ENCODE measurements at regions of chr6 and their contacts with region 1.

Region 1: GRCh38 chr6:32118782-32119628 is 9.0 kb downstream of the ATF6B start:
- DNase-seq: peak; percentile 90 to 91
- H3K4me3 ChIP-seq: no peak overlapping the region
- H3K27ac ChIP-seq: peak overlapping the region in 2 of 3 donors; percentile 26 to 57
- H3K4me1 ChIP-seq: peaks cover 2 to 16% of the 10 kb centered on the region in 2 donors
- H3K27me3 ChIP-seq: no peaks in the 10 kb centered on the region
- CTCF ChIP-seq: peak; percentile 77 to 96 (median 93)
- POLR2A ChIP-seq: no peak

Region 2: DNA sequence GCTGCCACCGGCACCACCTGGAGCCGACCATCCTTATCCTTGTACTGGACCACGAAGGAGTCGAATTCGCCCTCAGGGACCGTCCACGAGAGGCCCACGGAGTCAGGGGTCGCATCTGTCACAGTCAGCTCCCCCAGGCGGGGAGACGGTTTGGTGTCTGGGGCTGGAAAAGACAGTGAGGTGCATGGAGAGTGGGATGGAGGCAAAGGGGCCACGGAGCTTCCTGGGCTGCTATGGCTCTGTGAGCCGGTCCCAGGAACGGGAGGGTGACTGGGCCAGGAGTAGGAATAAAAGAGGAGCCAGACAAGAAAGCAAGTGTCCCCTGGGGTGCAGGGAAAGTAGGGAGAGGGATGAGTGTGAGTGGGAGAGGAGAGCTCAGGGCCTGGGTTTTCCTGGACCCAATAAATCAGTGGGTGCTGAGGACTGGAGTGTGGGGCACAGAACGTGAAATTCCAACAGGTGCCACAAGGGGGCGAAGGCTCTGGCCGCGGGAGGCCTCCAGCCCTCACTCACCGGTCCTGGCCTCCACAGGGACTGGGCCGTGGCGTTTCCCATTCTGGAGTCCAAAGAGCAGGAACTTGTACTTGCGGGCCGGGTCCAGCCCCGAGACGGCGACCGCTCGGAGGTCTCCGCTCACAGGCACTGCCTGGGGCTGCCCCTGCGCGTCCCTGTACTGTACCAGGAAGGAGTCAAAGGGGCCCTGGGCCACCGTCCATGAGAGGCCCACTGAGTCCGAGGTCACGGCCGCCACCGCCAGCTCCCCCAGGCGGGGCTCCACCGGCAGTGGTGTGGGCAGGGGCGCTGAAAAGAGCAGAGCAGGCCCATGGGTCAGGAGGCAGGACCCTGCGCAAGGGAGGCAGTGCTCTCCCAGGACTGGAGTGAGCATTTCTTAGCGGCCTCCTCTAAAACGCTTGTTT is 70.9 kb before region 1 on chr6:
- intact Hi-C with region 1: loop called (anchors 10 kb)
- DNase-seq: peak; percentile 63 to 68
- H3K4me3 ChIP-seq: no peak overlapping the region
- H3K27ac ChIP-seq: peak overlapping the region in 2 of 3 donors; percentile 52 to 82
- H3K4me1 ChIP-seq: peaks cover 0 to 27% of the 10 kb centered on the region in 2 donors
- H3K27me3 ChIP-seq: no peaks in the 10 kb centered on the region
- CTCF ChIP-seq: peak; percentile 68 to 93 (median 80)
- POLR2A ChIP-seq: no peak

Region 3: GRCh38 chr6:32153564-32154513 is 34.8 kb after region 1 on chr6 and contains the start of gene PPT2:
- intact Hi-C with region 1: loop called (anchors 5 kb)
- DNase-seq: peak; percentile 86 to 93
- H3K4me3 ChIP-seq: peak within 1 kb of the TSS; percentile 51 to 92 (median 57)
- H3K27ac ChIP-seq: peak within 1 kb of the TSS; percentile 68 to 95 (median 95)
- H3K4me1 ChIP-seq: peaks cover 25 to 26% of the 10 kb centered on the region in 2 donors
- H3K27me3 ChIP-seq: no peaks in the 10 kb centered on the region
- CTCF ChIP-seq: peak in 4 of 6 experiments; percentile 6 to 32 (median 27)
- POLR2A ChIP-seq: peak in 1 of 2 donors; percentile 60
- total RNA-seq, gene PPT2: 13.0 to 26.1 (median 24.1) TPM

Measured in thyroid gland (tissue), 4 donors.